HCT116 (cell line): ENCODE measurements at regions of chr1 and their contacts with region 1.

Region 1: DNA sequence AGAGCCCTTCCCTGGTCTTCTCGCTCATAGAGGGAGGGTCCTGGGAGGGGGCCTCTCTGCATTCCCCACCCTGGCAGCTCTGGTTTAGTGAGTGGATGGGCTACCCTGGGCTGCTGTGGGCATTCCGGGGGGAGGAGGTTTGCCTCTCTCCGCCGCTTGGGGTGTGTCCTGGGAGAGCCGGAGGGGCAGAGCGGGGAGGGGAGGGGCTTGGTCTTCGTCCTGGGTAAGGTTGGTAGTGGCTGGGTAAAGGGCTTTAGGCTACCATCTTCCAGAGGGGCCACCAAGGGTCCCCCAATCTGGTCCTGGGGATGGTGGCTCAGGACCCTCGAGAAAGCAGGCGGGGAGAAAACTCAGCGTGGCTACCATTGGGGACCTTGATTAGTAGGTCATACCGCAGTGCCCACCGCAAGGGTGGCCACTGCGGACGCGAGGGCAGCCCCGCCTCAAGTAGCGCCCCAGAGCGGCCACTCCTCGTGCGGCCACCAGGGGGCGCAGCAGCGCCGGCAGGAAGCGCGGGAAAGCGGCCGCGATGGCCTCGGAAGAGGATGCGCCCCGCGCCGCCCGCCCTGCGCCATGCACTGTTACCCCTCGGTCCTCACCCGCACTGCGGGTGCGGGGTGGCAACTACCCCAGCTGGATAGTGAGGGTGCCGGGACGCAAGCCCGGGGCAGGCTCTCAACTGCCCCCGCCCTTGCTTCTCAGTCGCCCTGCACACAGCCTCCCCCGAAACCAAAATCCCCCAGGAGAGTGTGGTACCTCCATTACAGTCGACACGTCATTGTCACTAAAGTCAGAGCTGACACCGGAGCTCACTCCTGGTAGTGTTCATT is 44.1 kb upstream of the SLC25A33 start:
- DNase-seq: peak; percentile 38
- ATAC-seq: peak; percentile 86
- H3K4me3 ChIP-seq: peak overlapping the region; percentile 29 to 40
- H3K27ac ChIP-seq: no peak overlapping the region
- H3K4me1 ChIP-seq: peaks cover 0 to 17% of the 10 kb centered on the region in 2 experiments; a peak in 2 of 4 replicates
- H3K27me3 ChIP-seq: no peaks in the 10 kb centered on the region
- CTCF ChIP-seq: peak; percentile 90 to 95 (median 92)
- POLR2A ChIP-seq: no peak
- RAD21 ChIP-seq: peak; percentile 84

Region 2: GRCh38 chr1:8913111-8913856 is 581.9 kb before region 1 on chr1:
- CTCF ChIA-PET with region 1: no interaction called
- POLR2A ChIA-PET with region 1: no interaction called
- RAD21 ChIA-PET with region 1: no interaction called
- intact Hi-C with region 1: loop called (anchors 5 kb)
- DNase-seq: no peak
- ATAC-seq: no peak
- H3K4me3 ChIP-seq: no peak overlapping the region
- H3K27ac ChIP-seq: no peak overlapping the region
- H3K4me1 ChIP-seq: peaks cover 0 to 4% of the 10 kb centered on the region in 2 experiments; a peak in 2 of 4 replicates
- H3K27me3 ChIP-seq: no peaks in the 10 kb centered on the region; the same call in 1 of the 2 replicates
- CTCF ChIP-seq: no peak
- POLR2A ChIP-seq: no peak
- RAD21 ChIP-seq: no peak

Region 3: GRCh38 chr1:9110669-9111356 is 384.3 kb before region 1 on chr1:
- CTCF ChIA-PET with region 1: interaction called, 13 read pairs
- POLR2A ChIA-PET with region 1: no interaction called
- RAD21 ChIA-PET with region 1: interaction called in 1 of 2 experiments, 5 read pairs
- intact Hi-C with region 1: loop called (anchors 5 kb)
- DNase-seq: peak; percentile 62
- ATAC-seq: peak; percentile 94
- H3K4me3 ChIP-seq: no peak overlapping the region
- H3K27ac ChIP-seq: no peak overlapping the region
- H3K4me1 ChIP-seq: peaks cover 0 to 3% of the 10 kb centered on the region in 2 experiments; a peak in 2 of 4 replicates
- H3K27me3 ChIP-seq: no peaks in the 10 kb centered on the region
- CTCF ChIP-seq: peak; percentile 94 to 96 (median 95)
- POLR2A ChIP-seq: no peak
- RAD21 ChIP-seq: peak; percentile 98

Region 4: DNA sequence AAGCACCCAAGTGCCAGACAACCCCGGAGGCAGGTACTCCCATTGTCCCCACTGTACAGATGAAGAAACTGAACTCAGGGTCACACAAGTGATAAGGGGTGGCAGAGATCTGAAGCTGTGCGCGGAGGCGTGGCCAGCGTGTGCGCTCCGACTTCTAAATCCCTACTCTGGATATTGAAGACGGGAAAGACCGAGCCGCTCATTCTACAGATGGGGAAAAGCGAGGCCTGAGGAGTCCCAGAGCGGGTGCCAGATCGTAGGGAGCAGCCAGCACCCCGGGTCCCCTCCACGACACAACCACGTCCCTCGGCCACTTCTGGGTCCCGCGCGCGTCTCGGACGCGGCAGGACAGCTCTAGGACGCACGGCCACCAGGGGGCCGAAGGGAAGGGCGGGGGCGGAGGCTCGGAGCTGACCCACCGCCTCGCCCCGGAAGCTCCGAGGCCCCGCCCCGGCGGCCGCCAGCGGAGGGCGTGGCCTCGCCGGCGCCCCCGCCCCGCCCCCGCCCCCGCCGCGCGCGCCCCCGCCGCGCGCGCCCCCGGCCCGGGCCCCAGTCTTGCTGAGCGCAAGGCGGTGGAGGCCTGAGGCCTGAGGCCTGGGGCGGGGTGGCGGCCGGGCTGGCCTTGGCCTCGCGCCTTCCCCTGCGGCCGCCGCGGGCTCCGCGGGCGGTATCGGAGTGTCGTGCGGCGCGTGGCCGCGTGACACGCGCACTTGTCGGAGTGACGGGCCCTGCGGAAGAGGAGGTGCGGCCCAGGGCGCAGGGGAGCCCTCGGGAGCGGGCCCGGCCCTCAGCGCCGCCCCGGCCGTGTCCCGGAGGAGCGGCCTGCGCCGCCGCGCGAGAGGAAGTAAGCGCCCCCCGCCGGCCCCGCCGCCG is 260.7 kb before region 1 on chr1 and contains the start of gene H6PD:
- CTCF ChIA-PET with region 1: interaction called, 10 read pairs
- POLR2A ChIA-PET with region 1: no interaction called
- RAD21 ChIA-PET with region 1: no interaction called
- intact Hi-C with region 1: no loop called
- DNase-seq: peak; percentile 66
- ATAC-seq: peak; percentile 87
- H3K4me3 ChIP-seq: peak within 1 kb of the TSS; percentile 67 to 88
- H3K27ac ChIP-seq: peak within 1 kb of the TSS; percentile 89
- H3K4me1 ChIP-seq: peaks cover 5 to 31% of the 10 kb centered on the region in 2 experiments
- H3K27me3 ChIP-seq: no peaks in the 10 kb centered on the region
- CTCF ChIP-seq: peak in 2 of 3 experiments; percentile 56 to 73; a peak in 4 of 6 replicates
- POLR2A ChIP-seq: peak; percentile 78
- RAD21 ChIP-seq: no peak
- total RNA-seq, gene H6PD: 16.2 TPM

Region 5: GRCh38 chr1:9270290-9270883 is 224.8 kb before region 1 on chr1:
- CTCF ChIA-PET with region 1: interaction called, 60 read pairs
- POLR2A ChIA-PET with region 1: no interaction called
- RAD21 ChIA-PET with region 1: interaction called, 9 to 13 read pairs
- intact Hi-C with region 1: loop called (anchors 1 kb)
- DNase-seq: no peak
- ATAC-seq: peak; percentile 35; the same call in 1 of the 2 replicates
- H3K4me3 ChIP-seq: no peak overlapping the region
- H3K27ac ChIP-seq: no peak overlapping the region
- H3K4me1 ChIP-seq: peaks cover 19 to 25% of the 10 kb centered on the region in 2 experiments
- H3K27me3 ChIP-seq: no peaks in the 10 kb centered on the region
- CTCF ChIP-seq: no peak
- POLR2A ChIP-seq: no peak
- RAD21 ChIP-seq: no peak

Region 6: GRCh38 chr1:9289090-9289534 is 206.0 kb before region 1 on chr1:
- CTCF ChIA-PET with region 1: interaction called, 46 read pairs
- POLR2A ChIA-PET with region 1: interaction called, 3 read pairs
- RAD21 ChIA-PET with region 1: interaction called, 6 to 11 read pairs
- intact Hi-C with region 1: loop called (anchors 1 kb)
- DNase-seq: peak; percentile 77
- ATAC-seq: no peak
- H3K4me3 ChIP-seq: no peak overlapping the region
- H3K27ac ChIP-seq: no peak overlapping the region
- H3K4me1 ChIP-seq: peaks cover 6 to 14% of the 10 kb centered on the region in 2 experiments
- H3K27me3 ChIP-seq: no peaks in the 10 kb centered on the region
- CTCF ChIP-seq: peak; percentile 88 to 96 (median 96)
- POLR2A ChIP-seq: no peak
- RAD21 ChIP-seq: peak; percentile 97

Region 7: DNA sequence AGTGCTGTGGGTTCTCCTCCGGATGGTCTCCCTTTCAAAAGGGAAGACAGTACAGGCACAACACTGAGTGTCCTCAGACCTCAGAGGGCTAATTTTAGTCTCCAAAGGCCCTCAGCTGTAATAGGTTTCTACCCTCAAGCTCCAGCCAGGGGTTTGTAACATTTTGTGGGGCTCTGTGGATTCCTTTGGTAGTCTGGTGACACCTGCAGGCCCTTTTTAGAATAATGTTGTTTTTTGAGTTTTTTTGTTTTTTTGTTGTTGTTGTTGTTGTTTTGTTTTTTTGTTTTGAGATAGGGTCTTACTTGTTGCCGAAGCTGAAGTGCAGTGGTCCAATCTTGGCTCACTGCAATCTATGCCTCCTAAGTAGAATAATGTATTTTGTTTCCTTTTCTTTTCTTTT is 78.6 kb after region 1 on chr1:
- CTCF ChIA-PET with region 1: interaction called, 10 read pairs
- POLR2A ChIA-PET with region 1: no interaction called
- RAD21 ChIA-PET with region 1: no interaction called
- intact Hi-C with region 1: loop called (anchors 1 kb)
- DNase-seq: no peak
- ATAC-seq: no peak
- H3K4me3 ChIP-seq: no peak overlapping the region
- H3K27ac ChIP-seq: no peak overlapping the region
- H3K4me1 ChIP-seq: no peaks in the 10 kb centered on the region
- H3K27me3 ChIP-seq: no peaks in the 10 kb centered on the region
- CTCF ChIP-seq: peak; percentile 20 to 57 (median 44); a peak in 4 of 6 replicates
- POLR2A ChIP-seq: no peak
- RAD21 ChIP-seq: peak; percentile 68

Region 8: GRCh38 chr1:9588551-9589143 is 93.5 kb after region 1 on chr1 and contains the start of gene TMEM201:
- CTCF ChIA-PET with region 1: no interaction called
- POLR2A ChIA-PET with region 1: no interaction called
- RAD21 ChIA-PET with region 1: no interaction called
- intact Hi-C with region 1: no loop called
- DNase-seq: peak; percentile 76
- ATAC-seq: peak; percentile 89
- H3K4me3 ChIP-seq: peak within 1 kb of the TSS; percentile 85 to 90
- H3K27ac ChIP-seq: peak within 1 kb of the TSS; percentile 74
- H3K4me1 ChIP-seq: peaks cover 13 to 28% of the 10 kb centered on the region in 2 experiments; a peak in 3 of 4 replicates
- H3K27me3 ChIP-seq: no peaks in the 10 kb centered on the region
- CTCF ChIP-seq: peak in 2 of 3 experiments; percentile 59 to 61; a peak in 4 of 6 replicates
- POLR2A ChIP-seq: no peak
- RAD21 ChIP-seq: no peak
- total RNA-seq, gene TMEM201: 27.6 TPM